Activated T-helper 1 cell treated with anti-CD3 and anti-CD28 coated beads, Interleukin-12 subunit alpha, Interleukin-12 subunit beta, Interleukin-2, Interleukin-4 antibody, amounts not matched to agents 30 ng/mL and 10 ng/mL and 1 ng/mL, durations not matched to agents 14 hours and 24 hours and 36 hours (primary cell): ENCODE measurements at regions of chr2 and their contacts with region 1.

Region 1: DNA sequence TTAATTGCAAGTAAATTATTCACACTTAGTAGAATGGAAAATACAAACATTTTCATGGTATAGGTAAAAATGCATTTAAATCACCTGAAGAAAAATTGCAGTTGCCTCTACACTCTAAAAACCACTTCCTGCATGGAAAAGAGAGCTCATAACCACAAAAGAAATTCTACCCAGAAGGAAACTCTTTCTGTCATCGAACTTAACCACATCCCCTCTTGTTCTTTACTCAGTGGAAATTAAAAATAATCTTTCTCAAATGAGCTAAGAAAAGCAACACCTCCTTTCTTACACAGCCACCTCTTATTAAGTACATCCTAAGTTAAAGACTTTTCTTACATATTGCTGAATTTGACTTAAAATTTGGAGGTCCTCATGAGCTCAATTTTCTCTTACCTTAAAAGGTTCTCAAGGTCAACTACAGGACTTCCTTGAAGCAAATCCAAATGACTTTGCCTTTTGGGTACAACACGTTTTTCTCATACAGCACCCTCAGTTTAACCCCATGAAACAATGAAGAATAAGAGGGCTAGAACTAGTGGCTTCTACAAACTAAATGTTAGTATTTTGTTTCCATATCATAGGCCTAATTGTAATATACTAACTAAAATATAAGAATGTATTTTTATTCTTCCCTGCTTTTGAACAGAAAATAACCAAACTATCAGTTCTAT is 109.1 kb upstream of the CRIM1 start:
- DNase-seq: peak; percentile 26
- H3K4me3 Mint-ChIP-seq: peak overlapping the region; percentile 21
- H3K27ac Mint-ChIP-seq: peak overlapping the region; percentile 94
- H3K4me1 Mint-ChIP-seq: peaks cover 71% of the 10 kb centered on the region
- H3K27me3 Mint-ChIP-seq: peaks cover 6% of the 10 kb centered on the region

Region 2: DNA sequence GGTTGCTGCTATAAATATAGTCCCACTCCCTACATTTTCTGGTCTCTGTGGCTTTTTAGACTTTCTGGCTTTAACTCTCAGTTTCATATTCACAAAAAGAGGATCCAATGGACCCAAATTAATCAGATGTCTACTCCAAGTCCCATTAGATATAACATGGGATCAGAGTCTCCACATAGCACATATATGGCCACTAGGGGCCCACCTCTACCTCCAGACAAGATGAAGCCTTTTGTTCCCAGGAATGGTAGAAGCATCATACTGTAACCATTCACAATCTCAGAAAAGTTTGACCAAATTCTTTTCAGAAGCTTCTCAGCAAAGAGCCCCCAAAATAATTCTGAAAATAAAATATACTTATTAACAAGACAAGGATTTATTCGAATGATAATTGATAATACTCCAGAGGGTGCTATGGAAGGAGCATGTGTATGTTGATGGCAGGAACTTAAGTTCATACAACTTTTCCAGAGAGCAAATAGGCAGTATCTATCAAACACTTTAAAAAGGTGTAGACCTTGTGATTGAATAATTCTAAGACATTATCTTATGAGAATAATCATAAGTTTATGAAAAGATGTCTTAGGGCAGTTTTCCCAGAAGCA is 273.2 kb before region 1 on chr2:
- intact Hi-C with region 1: loop called (anchors 5 kb)
- DNase-seq: no peak
- H3K4me3 Mint-ChIP-seq: no peak overlapping the region
- H3K27ac Mint-ChIP-seq: no peak overlapping the region
- H3K4me1 Mint-ChIP-seq: no peaks in the 10 kb centered on the region
- H3K27me3 Mint-ChIP-seq: peaks cover 16% of the 10 kb centered on the region

Region 3: DNA sequence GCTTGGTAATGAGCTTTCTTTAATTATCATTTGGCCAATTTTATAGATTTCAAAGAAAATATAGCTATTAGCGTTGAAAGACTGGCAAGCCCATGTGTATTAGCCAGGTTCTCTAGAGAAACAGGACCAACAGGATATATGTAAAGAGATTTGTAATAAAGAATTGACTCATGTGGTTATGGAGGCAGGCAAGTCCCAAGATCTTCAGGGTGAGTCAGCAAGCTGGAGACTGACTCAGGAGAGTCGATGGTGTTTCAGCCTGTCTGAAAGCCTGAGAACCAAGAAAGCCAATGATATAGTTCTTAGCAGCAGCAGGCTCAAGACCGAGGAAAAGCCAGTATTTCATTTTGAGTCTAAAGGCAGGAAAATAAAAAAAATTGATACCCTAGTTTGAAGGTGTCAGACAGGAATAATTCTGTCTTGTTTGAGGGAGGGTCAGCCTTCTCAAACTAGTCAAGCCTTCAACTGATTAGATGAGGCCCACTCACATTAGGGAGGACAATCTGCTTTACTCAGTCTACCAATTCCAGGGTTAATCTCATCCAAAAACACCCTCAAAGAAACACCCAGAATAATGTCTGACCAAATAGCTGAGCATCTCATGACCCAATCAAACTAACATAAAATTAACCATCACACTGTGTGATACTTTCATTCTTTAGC is 30.8 kb after region 1 on chr2:
- intact Hi-C with region 1: loop called (anchors 2 kb)
- DNase-seq: no peak
- H3K4me3 Mint-ChIP-seq: no peak overlapping the region
- H3K27ac Mint-ChIP-seq: peak overlapping the region; percentile 56
- H3K4me1 Mint-ChIP-seq: peaks cover 10% of the 10 kb centered on the region
- H3K27me3 Mint-ChIP-seq: peaks cover 2% of the 10 kb centered on the region

Region 4: DNA sequence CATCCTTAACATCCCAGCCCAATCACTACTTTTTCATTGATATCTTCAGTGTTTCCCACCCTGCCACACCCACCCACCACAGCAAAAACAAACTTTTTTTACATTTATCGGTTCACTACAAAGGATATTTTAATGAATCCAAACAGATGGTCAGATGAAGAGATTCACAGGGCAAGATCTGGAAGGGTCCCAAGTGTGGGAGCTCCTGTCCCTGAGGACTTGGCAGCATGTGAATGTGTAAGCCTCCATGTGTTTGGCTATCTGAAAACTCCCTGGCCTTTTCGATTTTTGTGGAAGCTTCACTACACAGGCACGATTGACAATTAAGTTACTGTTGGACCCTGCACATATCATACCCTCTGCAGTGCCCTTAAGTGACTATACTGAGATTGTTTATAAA is 61.0 kb after region 1 on chr2:
- intact Hi-C with region 1: loop called (anchors 1 kb)
- DNase-seq: no peak
- H3K4me3 Mint-ChIP-seq: no peak overlapping the region
- H3K27ac Mint-ChIP-seq: no peak overlapping the region
- H3K4me1 Mint-ChIP-seq: peaks cover 24% of the 10 kb centered on the region
- H3K27me3 Mint-ChIP-seq: peaks cover 4% of the 10 kb centered on the region

Region 5: DNA sequence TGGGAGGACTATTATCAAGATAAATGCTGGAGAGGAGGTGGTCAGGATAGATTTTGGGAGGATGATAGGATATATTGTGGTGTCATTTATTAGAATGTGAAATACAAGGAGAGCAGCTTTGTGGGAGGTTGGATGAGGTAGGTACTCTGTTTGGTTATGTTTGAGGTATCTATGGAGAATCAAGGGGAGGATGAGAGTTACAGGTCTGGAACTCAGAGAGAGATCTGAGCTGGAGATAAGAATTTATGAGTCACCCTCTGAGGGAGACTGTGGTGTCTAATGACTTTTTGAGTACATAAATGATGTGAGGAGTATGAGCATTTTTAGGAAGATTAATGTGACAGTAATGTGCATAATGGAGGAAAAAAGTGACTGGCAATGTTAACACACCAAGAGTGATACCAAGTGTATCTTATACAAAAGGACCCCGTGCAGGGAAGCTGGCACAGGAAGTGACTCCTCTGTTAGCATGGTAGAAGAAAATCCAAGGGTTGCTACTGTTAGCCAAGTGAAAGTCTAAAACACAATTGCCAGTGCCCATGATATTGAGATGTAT is 157.3 kb after region 1 on chr2:
- intact Hi-C with region 1: no loop called
- DNase-seq: no peak
- H3K4me3 Mint-ChIP-seq: no peak overlapping the region
- H3K27ac Mint-ChIP-seq: no peak overlapping the region
- H3K4me1 Mint-ChIP-seq: no peaks in the 10 kb centered on the region
- H3K27me3 Mint-ChIP-seq: peaks cover 5% of the 10 kb centered on the region

Region 6: GRCh38 chr2:36966370-36967235 is 720.1 kb after region 1 on chr2 and contains the start of gene STRN:
- intact Hi-C with region 1: loop called (anchors 5 kb)
- DNase-seq: peak; percentile 99
- H3K4me3 Mint-ChIP-seq: peak within 1 kb of the TSS; percentile 95
- H3K27ac Mint-ChIP-seq: peak within 1 kb of the TSS; percentile 98
- H3K4me1 Mint-ChIP-seq: peaks cover 61% of the 10 kb centered on the region
- H3K27me3 Mint-ChIP-seq: no peaks in the 10 kb centered on the region
- total RNA-seq, gene STRN: 28.8 and 29.0 TPM in 2 replicates